ENCODE measurements at regions of chr11 and their contacts with region 1.

Region 1: DNA sequence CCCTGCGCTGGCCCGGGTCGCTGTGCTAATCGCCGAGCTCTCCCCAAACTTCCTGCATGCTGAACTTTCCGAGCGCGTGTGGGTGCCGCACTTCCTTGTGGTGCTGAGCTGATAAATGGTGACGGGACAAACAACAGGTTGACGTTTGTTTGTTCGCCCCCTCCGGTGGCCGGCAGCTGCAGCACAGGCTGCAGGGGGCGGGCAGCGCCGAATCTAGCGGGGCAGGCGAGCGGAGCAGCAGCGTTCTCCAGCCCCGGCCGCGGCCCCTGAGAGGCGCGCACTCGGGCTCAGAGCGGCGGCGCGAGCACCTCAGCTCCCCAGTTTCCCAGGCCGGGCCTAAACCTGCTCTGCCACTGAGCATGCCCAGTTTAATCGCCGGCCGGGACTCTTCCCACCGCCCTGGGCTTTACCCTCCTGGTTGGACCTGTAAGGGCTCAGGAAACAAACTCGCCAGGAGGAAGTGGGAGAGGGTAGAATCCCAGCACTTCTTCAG is at the start of gene PDGFD:
- DNase-seq: peak; percentile 65
- ATAC-seq: peak; percentile 87 to 97 (median 92)
- H3K4me3 ChIP-seq: peak within 1 kb of the TSS; percentile 37 to 72 (median 66)
- H3K27ac ChIP-seq: peak within 1 kb of the TSS in 9 of 10 donors; percentile 33 to 71 (median 62)
- H3K4me1 ChIP-seq: peaks cover 0 to 17% (median 7%) of the 10 kb centered on the region in 9 donors
- H3K27me3 ChIP-seq: peaks cover 0 to 14% (median 0%) of the 10 kb centered on the region in 7 donors
- CTCF ChIP-seq: peak in 8 of 9 donors; percentile 29 to 67 (median 54)
- total RNA-seq, gene PDGFD: 7.3 to 17.5 (median 11.3) TPM

Region 2: GRCh38 chr11:103688924-103689323 is 475.1 kb before region 1 on chr11:
- intact Hi-C with region 1: loop called in 2 of 10 experiments (anchors 5 to 10 kb)
- DNase-seq: no peak
- ATAC-seq: no peak
- H3K4me3 ChIP-seq: no peak overlapping the region
- H3K27ac ChIP-seq: no peak overlapping the region
- H3K4me1 ChIP-seq: no peaks in the 10 kb centered on the region
- H3K27me3 ChIP-seq: no peaks in the 10 kb centered on the region
- CTCF ChIP-seq: no peak

Region 3: GRCh38 chr11:103798026-103798425 is 366.0 kb before region 1 on chr11:
- intact Hi-C with region 1: loop called in 1 of 10 experiments (anchors 10 kb)
- DNase-seq: peak in 1 of 2 donors; percentile 20
- ATAC-seq: peak in 7 of 8 donors; percentile 37 to 73 (median 67)
- H3K4me3 ChIP-seq: no peak overlapping the region
- H3K27ac ChIP-seq: peak overlapping the region in 8 of 10 donors; percentile 16 to 76 (median 48)
- H3K4me1 ChIP-seq: peaks cover 0 to 27% (median 18%) of the 10 kb centered on the region in 9 donors
- H3K27me3 ChIP-seq: no peaks in the 10 kb centered on the region
- CTCF ChIP-seq: no peak

Region 4: GRCh38 chr11:104051811-104052210 is 112.3 kb before region 1 on chr11:
- intact Hi-C with region 1: no loop called
- DNase-seq: no peak
- ATAC-seq: no peak
- H3K4me3 ChIP-seq: no peak overlapping the region
- H3K27ac ChIP-seq: no peak overlapping the region
- H3K4me1 ChIP-seq: peaks cover 0 to 12% (median 0%) of the 10 kb centered on the region in 9 donors
- H3K27me3 ChIP-seq: no peaks in the 10 kb centered on the region
- CTCF ChIP-seq: no peak

Measured in heart right ventricle (tissue), 16 donors.